ENCODE measurements at regions of chr7 and their contacts with region 1.

Region 1: GRCh38 chr7:66654123-66654732 is 25.5 kb downstream of the KCTD7 start:
- DNase-seq: peak; percentile 95 to 99 (median 98)
- ATAC-seq: peak; percentile 92 to 96
- H3K4me3 Mint-ChIP-seq: peak overlapping the region; percentile 93 to 100 (median 98)
- H3K27ac Mint-ChIP-seq: peak overlapping the region; percentile 93 to 100 (median 99)
- H3K4me1 Mint-ChIP-seq: peaks cover 14 to 42% (median 36%) of the 10 kb centered on the region in 4 donors
- H3K27me3 Mint-ChIP-seq: no peaks in the 10 kb centered on the region

Region 2: GRCh38 chr7:66591799-66592596 is 62.2 kb before region 1 on chr7:
- POLR2A ChIA-PET with region 1: interaction called, 10 read pairs
- DNase-seq: peak; percentile 71 to 94 (median 86)
- ATAC-seq: peak; percentile 97 to 99
- H3K4me3 Mint-ChIP-seq: peak overlapping the region; percentile 91 to 99 (median 96)
- H3K27ac Mint-ChIP-seq: peak overlapping the region; percentile 89 to 99 (median 98)
- H3K4me1 Mint-ChIP-seq: peaks cover 23 to 57% (median 50%) of the 10 kb centered on the region in 4 donors
- H3K27me3 Mint-ChIP-seq: no peaks in the 10 kb centered on the region

Region 3: GRCh38 chr7:66628361-66629140 is 25.7 kb before region 1 on chr7 and contains the start of gene KCTD7:
- POLR2A ChIA-PET with region 1: interaction called, 20 read pairs
- DNase-seq: peak; percentile 86 to 98 (median 93)
- ATAC-seq: peak; percentile 89 to 92
- H3K4me3 Mint-ChIP-seq: peak within 1 kb of the TSS; percentile 68 to 94 (median 90)
- H3K27ac Mint-ChIP-seq: peak within 1 kb of the TSS; percentile 83 to 96 (median 91)
- H3K4me1 Mint-ChIP-seq: peaks cover 24 to 51% (median 48%) of the 10 kb centered on the region in 4 donors
- H3K27me3 Mint-ChIP-seq: no peaks in the 10 kb centered on the region
- polyA plus RNA-seq, gene KCTD7: 11.0 to 14.5 (median 11.9) TPM

Region 4: DNA sequence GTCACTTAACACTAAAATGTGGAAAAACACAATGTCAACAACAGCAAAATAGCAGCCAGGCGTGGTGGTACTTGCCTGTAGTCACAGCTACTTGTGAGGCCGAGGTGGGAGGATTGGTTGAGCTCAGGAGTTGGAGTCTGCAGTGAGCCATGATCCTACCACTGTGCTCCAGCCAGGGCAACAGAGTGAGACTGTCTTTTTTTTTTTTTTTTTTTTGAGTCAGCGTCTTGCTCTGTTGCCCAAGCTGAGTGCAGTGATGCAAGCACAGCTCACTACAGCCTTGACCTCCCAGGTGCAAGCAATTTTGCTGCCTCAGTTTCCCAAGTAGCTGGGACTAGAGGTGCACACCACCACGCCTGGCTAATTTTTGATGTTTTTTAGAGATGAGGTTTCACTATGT is 19.4 kb before region 1 on chr7:
- POLR2A ChIA-PET with region 1: interaction called, 20 read pairs
- DNase-seq: no peak
- ATAC-seq: no peak
- H3K4me3 Mint-ChIP-seq: no peak overlapping the region
- H3K27ac Mint-ChIP-seq: peak overlapping the region in 1 of 10 donors; percentile 63
- H3K4me1 Mint-ChIP-seq: peaks cover 28 to 46% (median 40%) of the 10 kb centered on the region in 4 donors
- H3K27me3 Mint-ChIP-seq: no peaks in the 10 kb centered on the region

Region 5: GRCh38 chr7:66681491-66682349 is 27.5 kb after region 1 on chr7:
- POLR2A ChIA-PET with region 1: interaction called, 11 read pairs
- DNase-seq: peak; percentile 89 to 98 (median 96)
- ATAC-seq: peak; percentile 94 to 95
- H3K4me3 Mint-ChIP-seq: peak overlapping the region; percentile 86 to 97 (median 90)
- H3K27ac Mint-ChIP-seq: peak overlapping the region; percentile 91 to 99 (median 98)
- H3K4me1 Mint-ChIP-seq: peaks cover 15 to 47% (median 42%) of the 10 kb centered on the region in 4 donors
- H3K27me3 Mint-ChIP-seq: no peaks in the 10 kb centered on the region

Region 6: GRCh38 chr7:66693331-66693730 is 39.1 kb after region 1 on chr7:
- POLR2A ChIA-PET with region 1: no interaction called
- DNase-seq: no peak
- ATAC-seq: no peak
- H3K4me3 Mint-ChIP-seq: peak overlapping the region in 1 of 10 donors; percentile 8
- H3K27ac Mint-ChIP-seq: peak overlapping the region in 1 of 10 donors; percentile 83
- H3K4me1 Mint-ChIP-seq: peaks cover 0 to 4% (median 0%) of the 10 kb centered on the region in 4 donors
- H3K27me3 Mint-ChIP-seq: no peaks in the 10 kb centered on the region

Region 7: DNA sequence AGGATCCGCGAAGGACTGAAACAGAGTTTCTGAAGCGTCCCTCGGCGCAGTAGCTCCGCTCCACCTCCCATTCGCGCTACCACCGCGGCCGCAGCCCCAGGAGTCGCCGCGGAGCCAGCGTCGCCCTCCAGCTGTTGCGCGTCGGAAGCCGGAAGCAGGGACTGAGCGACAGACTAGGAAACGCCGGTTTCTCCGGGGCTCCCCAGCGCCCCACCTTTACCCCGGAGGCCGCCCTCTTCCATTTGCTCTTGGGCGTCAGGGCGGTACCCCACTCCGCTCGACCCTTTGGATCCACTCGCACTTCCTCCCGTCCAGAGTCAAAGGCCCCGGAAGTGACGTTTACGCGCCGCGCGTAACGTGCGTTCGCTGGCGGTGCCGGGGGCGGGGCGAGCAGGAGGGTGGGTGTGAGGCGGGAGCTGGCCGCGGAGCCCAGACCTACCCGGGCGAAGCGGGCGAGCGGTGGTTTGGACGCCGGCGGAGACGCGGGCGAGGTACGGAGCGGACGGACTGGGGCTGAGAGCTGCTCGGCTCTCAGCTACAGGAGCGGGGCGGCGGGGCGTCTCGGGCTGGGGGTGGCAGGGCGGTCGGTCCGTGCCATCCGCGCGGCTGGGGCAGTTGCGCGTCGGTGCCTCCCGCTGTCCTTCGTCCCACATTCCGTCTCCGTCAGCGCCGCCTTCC is 86.2 kb after region 1 on chr7 and contains the start of gene RABGEF1:
- POLR2A ChIA-PET with region 1: interaction called, 16 read pairs
- DNase-seq: peak; percentile 94 to 99 (median 97)
- ATAC-seq: peak; percentile 94 to 96
- H3K4me3 Mint-ChIP-seq: peak within 1 kb of the TSS; percentile 90 to 99 (median 94)
- H3K27ac Mint-ChIP-seq: peak within 1 kb of the TSS; percentile 90 to 99 (median 97)
- H3K4me1 Mint-ChIP-seq: peaks cover 23 to 65% (median 56%) of the 10 kb centered on the region in 4 donors
- H3K27me3 Mint-ChIP-seq: no peaks in the 10 kb centered on the region
- polyA plus RNA-seq, gene RABGEF1: 17.5 to 23.0 (median 21.6) TPM

Measured in naive thymus-derived CD8-positive, alpha-beta T cell (primary cell).